B cell (primary cell): ENCODE measurements at regions of chr19 and their contacts with region 1.

Region 1: DNA sequence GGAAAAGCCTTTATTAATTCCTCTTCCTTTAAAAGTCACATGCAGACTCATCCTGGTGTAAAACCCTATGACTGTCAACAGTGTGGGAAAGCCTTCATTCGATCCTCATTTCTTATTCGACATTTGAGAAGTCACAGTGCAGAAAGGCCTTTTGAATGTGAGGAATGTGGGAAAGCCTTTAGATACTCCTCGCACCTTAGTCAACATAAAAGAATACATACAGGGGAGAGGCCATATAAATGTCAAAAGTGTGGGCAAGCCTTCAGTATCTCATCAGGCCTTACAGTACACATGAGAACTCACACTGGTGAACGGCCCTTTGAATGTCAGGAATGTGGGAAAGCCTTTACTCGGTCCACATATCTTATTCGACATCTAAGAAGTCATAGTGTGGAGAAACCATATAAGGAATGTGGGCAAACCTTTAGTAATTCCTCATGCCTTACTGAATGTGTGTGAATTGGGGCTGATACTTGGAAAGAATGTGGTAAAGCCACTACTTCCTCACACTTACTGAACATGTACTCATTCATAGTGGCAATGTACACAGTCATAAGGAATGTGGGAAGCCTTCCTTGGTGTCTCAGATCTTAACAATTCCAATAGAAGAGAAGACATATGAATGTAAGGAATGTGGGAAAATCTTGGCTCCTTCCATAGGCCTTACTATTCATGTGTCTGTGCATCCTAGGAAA is 18.8 kb downstream of the ZNF559 start:
- DNase-seq: no peak
- ATAC-seq: no peak
- H3K4me3 ChIP-seq: peak overlapping the region in 1 of 5 experiments; percentile 18
- H3K4me3 Mint-ChIP-seq: no peak overlapping the region
- H3K27ac ChIP-seq: no peak overlapping the region
- H3K27ac Mint-ChIP-seq: no peak overlapping the region
- H3K4me1 ChIP-seq: no peaks in the 10 kb centered on the region
- H3K4me1 Mint-ChIP-seq: no peaks in the 10 kb centered on the region
- H3K27me3 ChIP-seq: no peaks in the 10 kb centered on the region
- H3K27me3 Mint-ChIP-seq: no peaks in the 10 kb centered on the region
- CTCF ChIP-seq: no peak

Region 2: GRCh38 chr19:9295411-9295849 is 47.3 kb before region 1 on chr19:
- CTCF ChIA-PET with region 1: no interaction called
- POLR2A ChIA-PET with region 1: no interaction called
- intact Hi-C with region 1: loop called (anchors 10 kb)
- DNase-seq: no peak
- ATAC-seq: no peak
- H3K4me3 ChIP-seq: no peak overlapping the region
- H3K4me3 Mint-ChIP-seq: no peak overlapping the region
- H3K27ac ChIP-seq: no peak overlapping the region
- H3K27ac Mint-ChIP-seq: no peak overlapping the region
- H3K4me1 ChIP-seq: no peaks in the 10 kb centered on the region
- H3K4me1 Mint-ChIP-seq: no peaks in the 10 kb centered on the region
- H3K27me3 ChIP-seq: no peaks in the 10 kb centered on the region
- H3K27me3 Mint-ChIP-seq: no peaks in the 10 kb centered on the region
- CTCF ChIP-seq: no peak